Activated B cell treated with CpG ODN at 0.5 μM for 24 hours (primary cell): ENCODE measurements at regions of chr19 and their contacts with region 1.

Region 1: DNA sequence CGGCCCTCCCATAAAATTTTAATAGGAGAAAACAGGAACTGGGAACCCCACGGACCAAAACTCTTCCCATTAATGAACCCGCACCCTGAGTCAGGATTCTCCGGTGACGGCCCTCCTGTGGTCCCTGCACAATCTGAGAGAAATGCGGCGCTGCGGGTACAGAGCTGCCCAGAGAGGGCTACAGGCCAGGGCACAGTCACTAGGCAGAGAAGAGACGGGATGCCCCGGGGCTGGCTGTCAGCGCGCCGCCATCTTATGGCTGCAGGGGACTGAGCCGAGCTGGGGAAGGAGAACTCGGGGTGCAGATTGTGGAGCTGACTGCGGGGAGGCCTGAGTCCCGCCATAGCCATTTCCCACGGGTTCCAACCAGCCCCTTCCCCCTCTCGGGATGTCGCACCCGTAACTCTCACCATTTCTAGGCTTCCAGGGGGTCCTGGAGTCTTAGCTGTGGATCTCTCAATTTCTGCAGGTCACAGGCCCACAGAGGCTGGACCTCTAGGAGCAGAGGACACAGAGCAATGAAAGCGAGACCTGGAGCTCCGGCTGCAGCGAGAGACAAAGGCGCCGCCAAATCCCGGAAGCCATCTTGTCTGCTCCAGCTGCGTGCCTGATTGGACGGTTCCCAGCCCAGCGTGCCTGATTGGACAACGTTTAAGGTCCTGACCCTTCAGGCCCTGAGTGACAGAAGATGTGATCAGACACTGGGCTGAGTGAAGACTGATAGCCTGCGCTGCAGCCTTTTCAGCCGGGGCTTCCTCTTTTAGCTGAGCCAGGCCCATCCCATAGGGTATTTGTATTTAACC is at the start of gene ZNF675:
- DNase-seq: peak; percentile 75
- ATAC-seq: peak; percentile 97
- H3K4me3 Mint-ChIP-seq: peak within 1 kb of the TSS; percentile 99
- H3K27ac Mint-ChIP-seq: peak within 1 kb of the TSS; percentile 98
- H3K4me1 Mint-ChIP-seq: peaks cover 49% of the 10 kb centered on the region
- H3K27me3 Mint-ChIP-seq: no peaks in the 10 kb centered on the region
- CTCF ChIP-seq: no peak
- total RNA-seq, gene ZNF675: 27.9 and 34.2 TPM in 2 replicates

Region 2: DNA sequence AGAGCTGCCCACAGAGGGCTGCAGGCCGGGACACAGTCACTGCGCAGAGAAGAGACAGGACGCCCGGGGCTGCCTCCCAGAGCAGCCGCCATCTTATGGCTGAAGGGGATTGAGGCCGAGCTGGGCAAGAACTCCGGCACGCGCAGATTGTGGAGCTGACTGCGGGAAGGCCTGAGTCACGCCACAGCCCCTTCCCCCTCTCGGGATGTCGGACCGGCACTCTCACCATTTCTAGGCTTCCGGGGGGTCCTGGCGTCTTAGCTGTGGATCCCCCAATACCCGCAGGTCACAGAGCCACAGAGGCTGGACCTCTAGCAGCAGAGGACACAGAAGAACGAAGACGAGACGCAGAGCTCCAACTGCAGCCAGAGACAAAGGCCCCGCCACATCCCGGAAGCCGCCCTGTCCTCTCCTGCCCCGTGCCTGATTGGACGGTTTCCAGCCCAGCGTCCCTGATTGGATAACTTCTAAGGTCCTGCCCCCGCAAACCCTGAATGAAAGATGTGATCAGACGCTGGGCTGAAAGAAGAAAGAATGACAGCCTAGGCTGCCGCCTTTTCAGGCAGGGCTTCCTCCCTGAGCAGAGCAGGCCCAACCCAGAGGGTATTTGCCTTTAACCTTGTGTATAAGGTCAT is 1850.9 kb before region 1 on chr19 and contains the start of gene ZNF43:
- CTCF ChIA-PET with region 1: no interaction called
- POLR2A ChIA-PET with region 1: no interaction called
- intact Hi-C with region 1: loop called (anchors 5 kb)
- DNase-seq: peak; percentile 77
- ATAC-seq: peak; percentile 98
- H3K4me3 Mint-ChIP-seq: peak within 1 kb of the TSS; percentile 100
- H3K27ac Mint-ChIP-seq: peak within 1 kb of the TSS; percentile 100
- H3K4me1 Mint-ChIP-seq: peaks cover 38% of the 10 kb centered on the region
- H3K27me3 Mint-ChIP-seq: no peaks in the 10 kb centered on the region
- CTCF ChIP-seq: no peak
- total RNA-seq, gene ZNF43: 41.8 and 52.4 TPM in 2 replicates

Region 3: DNA sequence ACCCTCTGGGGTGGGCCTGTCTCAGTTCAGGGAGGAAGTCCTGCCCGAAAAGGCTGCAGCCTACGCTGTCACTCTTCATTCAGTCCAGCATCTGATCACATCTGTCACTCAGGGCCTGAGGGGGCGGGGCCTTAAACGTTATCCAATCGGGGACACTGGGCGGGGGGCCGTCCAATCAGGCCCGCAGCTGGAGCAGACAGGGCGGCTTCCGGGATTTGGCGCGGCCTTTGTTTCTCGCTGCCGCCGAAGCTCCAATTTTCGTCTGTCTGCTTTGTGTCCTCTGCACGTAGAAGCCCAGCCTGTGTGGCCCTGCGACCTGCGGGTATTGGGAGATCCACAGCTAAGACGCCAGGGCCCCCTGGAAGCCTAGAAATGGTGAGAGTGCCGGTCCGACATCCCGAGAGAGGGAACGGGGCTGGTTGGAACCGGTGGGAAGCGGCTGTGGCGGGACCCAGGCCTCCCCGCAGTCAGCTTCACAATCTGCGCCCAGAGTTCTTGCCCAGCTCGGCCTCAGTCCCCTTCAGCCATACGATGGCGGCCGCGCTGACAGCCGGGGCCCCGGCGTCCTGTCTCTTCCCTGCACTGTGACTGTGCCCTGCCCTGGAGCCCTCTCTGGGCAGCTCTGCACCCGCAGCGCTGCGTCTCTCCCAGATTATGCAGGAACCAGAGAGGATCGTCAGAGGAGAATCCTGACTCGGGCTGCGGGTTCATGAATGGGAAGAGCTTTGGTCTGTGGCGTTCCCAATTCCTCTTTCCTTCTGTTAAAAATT is 569.8 kb before region 1 on chr19 and contains the start of gene ZNF730:
- CTCF ChIA-PET with region 1: no interaction called
- POLR2A ChIA-PET with region 1: no interaction called
- intact Hi-C with region 1: loop called (anchors 1 kb)
- DNase-seq: peak; percentile 55
- ATAC-seq: peak; percentile 99
- H3K4me3 Mint-ChIP-seq: peak within 1 kb of the TSS; percentile 91
- H3K27ac Mint-ChIP-seq: peak within 1 kb of the TSS; percentile 24
- H3K4me1 Mint-ChIP-seq: peaks cover 11% of the 10 kb centered on the region
- H3K27me3 Mint-ChIP-seq: no peaks in the 10 kb centered on the region
- CTCF ChIP-seq: no peak
- total RNA-seq, gene ZNF730: 1.3 and 1.5 TPM in 2 replicates

Region 4: DNA sequence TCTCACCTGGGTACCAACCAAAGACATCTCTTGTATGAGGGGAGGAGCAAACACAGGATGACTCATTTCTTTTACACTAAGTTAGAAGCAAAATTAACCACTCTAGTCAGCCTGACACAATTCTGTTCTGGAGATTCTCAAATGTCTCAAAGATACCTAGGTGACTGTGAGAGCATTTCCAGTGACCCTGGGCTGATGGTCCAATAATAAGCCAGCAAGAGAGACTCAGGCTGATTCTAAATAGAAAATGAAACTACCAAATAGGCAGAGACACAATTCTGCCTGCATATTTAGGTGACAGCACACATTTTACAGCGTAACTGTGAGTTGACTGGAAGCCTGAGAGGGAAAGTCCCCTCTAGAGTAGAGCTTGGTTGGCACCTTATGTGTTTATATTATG is 307.9 kb before region 1 on chr19:
- CTCF ChIA-PET with region 1: no interaction called
- POLR2A ChIA-PET with region 1: no interaction called
- intact Hi-C with region 1: no loop called
- DNase-seq: no peak
- ATAC-seq: no peak
- H3K4me3 Mint-ChIP-seq: no peak overlapping the region
- H3K27ac Mint-ChIP-seq: no peak overlapping the region
- H3K4me1 Mint-ChIP-seq: peaks cover 10% of the 10 kb centered on the region
- H3K27me3 Mint-ChIP-seq: no peaks in the 10 kb centered on the region
- CTCF ChIP-seq: no peak

Region 5: DNA sequence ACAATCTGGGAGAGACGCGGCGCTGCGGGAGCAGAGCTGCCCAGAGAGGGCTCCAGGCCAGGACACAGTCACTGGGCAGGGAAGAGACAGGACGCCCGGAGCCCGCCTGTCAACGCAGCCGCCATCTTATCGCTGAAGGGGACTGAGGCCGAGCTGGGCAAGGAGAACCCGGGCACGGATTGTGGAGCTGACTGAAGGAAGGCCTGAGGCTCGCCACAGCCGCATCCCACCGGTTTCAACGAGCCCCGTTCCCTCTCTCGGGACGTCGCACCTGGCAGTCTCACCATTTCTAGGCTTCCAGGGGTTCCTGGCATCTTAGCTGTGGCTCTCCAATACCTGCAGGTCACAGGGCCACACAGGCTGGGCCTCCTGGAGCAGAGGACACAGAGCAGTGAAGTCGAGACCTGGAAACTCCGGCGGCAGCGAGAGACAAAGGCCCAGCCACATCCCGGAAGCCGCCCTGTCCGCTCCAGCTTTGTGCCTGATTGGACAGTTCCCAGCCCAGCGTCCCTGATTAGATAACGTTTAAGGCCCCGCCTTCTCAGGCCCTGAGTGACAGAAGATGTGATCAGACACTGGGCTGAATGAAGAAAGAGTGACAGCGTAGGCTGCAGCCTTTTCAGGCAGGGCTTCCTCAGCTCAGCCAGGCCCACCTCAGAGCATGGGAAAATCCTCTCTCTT is 291.6 kb before region 1 on chr19 and contains the start of gene ZNF91:
- CTCF ChIA-PET with region 1: no interaction called
- POLR2A ChIA-PET with region 1: interaction called, 25 read pairs
- intact Hi-C with region 1: loop called (anchors 2 kb)
- DNase-seq: peak; percentile 76
- ATAC-seq: peak; percentile 96
- H3K4me3 Mint-ChIP-seq: peak within 1 kb of the TSS; percentile 99
- H3K27ac Mint-ChIP-seq: peak within 1 kb of the TSS; percentile 98
- H3K4me1 Mint-ChIP-seq: peaks cover 40% of the 10 kb centered on the region
- H3K27me3 Mint-ChIP-seq: no peaks in the 10 kb centered on the region
- CTCF ChIP-seq: no peak
- total RNA-seq, gene ZNF91: 56.4 and 70.9 TPM in 2 replicates

Region 6: DNA sequence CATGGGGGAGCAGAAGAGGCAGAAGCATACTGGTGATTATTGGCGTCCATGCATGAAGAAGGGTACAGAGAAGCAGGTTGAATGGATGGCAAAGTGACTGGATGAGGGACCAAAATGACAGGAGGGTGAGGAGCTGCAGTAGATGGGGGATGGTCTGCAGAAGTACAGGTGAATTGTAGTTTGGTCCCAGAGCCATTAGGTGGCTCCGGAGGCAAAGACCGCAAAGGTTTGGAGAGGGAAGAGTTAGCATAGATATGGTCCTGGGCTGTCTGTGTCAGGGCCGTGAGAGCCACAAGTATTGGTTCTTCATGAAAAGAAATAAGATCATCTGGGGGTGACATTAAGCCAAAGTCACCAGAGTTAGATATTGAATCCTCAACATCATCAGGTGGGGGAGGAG is 168.9 kb after region 1 on chr19:
- CTCF ChIA-PET with region 1: no interaction called
- POLR2A ChIA-PET with region 1: no interaction called
- intact Hi-C with region 1: no loop called
- DNase-seq: no peak
- ATAC-seq: no peak
- H3K4me3 Mint-ChIP-seq: no peak overlapping the region
- H3K27ac Mint-ChIP-seq: no peak overlapping the region
- H3K4me1 Mint-ChIP-seq: no peaks in the 10 kb centered on the region
- H3K27me3 Mint-ChIP-seq: no peaks in the 10 kb centered on the region
- CTCF ChIP-seq: no peak

Region 7: GRCh38 chr19:23914402-23915301 is 227.8 kb after region 1 on chr19 and contains the start of gene ZNF726:
- CTCF ChIA-PET with region 1: no interaction called
- POLR2A ChIA-PET with region 1: interaction called, 5 read pairs
- intact Hi-C with region 1: loop called (anchors 2 kb)
- DNase-seq: peak; percentile 67
- ATAC-seq: peak; percentile 97
- H3K4me3 Mint-ChIP-seq: peak within 1 kb of the TSS; percentile 96
- H3K27ac Mint-ChIP-seq: peak within 1 kb of the TSS; percentile 83
- H3K4me1 Mint-ChIP-seq: peaks cover 10% of the 10 kb centered on the region
- H3K27me3 Mint-ChIP-seq: no peaks in the 10 kb centered on the region
- CTCF ChIP-seq: no peak
- total RNA-seq, gene ZNF726: 8.2 and 9.4 TPM in 2 replicates